WTC11 (cell line): ENCODE measurements at regions of chr3 and their contacts with region 1.

Region 1: GRCh38 chr3:150503402-150504099 is 42.7 kb downstream of the SERP1 start:
- DNase-seq: peak; percentile 24
- ATAC-seq: peak; percentile 92
- H3K4me3 Mint-ChIP-seq: no peak overlapping the region
- H3K27ac Mint-ChIP-seq: no peak overlapping the region
- H3K4me1 Mint-ChIP-seq: no peaks in the 10 kb centered on the region
- H3K27me3 Mint-ChIP-seq: peaks cover 4% of the 10 kb centered on the region
- CTCF ChIP-seq: no peak

Region 2: GRCh38 chr3:150384296-150385212 is 119.0 kb before region 1 on chr3:
- CTCF ChIA-PET with region 1: interaction called, 11 read pairs
- POLR2A ChIA-PET with region 1: no interaction called
- DNase-seq: peak; percentile 51
- ATAC-seq: peak; percentile 100
- H3K4me3 Mint-ChIP-seq: peak overlapping the region; percentile 36
- H3K27ac Mint-ChIP-seq: peak overlapping the region; percentile 89
- H3K4me1 Mint-ChIP-seq: peaks cover 18% of the 10 kb centered on the region
- H3K27me3 Mint-ChIP-seq: no peaks in the 10 kb centered on the region
- CTCF ChIP-seq: no peak

Region 3: DNA sequence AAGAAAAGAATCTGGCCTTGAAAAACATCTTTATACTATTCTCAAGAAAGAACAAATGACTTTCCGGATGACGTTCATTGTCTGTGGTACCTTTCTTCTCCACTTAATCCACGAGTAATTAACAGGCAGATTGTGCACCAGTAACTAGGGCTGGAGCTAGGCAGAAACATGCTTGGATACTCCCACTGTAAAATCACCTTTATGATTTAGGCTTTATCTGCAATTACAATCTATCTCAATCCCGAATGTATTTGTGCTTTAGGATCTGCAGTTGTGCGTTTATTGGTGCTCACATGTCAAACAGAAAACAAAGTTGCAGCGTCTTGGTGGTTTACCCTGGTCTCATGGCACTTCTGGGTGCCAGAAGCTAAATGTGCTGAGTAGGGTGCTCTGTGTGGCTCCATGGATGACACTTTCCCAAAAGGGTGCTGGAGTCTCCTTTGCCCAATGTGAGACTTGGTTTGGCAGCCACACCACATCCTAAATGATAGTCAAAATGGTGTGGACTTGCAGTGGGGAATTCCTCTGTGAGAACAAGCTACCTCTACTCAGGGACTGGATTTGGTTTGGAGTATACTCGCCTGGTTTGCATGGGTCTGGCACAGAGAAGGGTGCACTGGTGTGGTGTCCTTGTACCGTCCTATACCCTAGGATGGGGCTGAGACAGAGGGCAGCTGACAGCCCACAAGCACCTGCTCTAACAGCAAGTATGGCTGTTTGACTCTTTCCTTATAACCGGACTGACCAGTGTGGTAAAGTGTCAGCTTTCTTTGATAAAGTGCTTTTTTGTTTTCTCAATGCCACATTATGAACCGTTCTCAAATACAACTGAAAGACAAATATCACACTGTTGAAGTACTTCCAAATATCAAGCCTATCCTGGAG is 35.0 kb after region 1 on chr3:
- CTCF ChIA-PET with region 1: no interaction called
- POLR2A ChIA-PET with region 1: no interaction called
- DNase-seq: no peak
- ATAC-seq: peak; percentile 55
- H3K4me3 Mint-ChIP-seq: no peak overlapping the region
- H3K27ac Mint-ChIP-seq: no peak overlapping the region
- H3K4me1 Mint-ChIP-seq: no peaks in the 10 kb centered on the region
- H3K27me3 Mint-ChIP-seq: no peaks in the 10 kb centered on the region; the same call in 1 of the 2 replicates
- CTCF ChIP-seq: no peak

Region 4: DNA sequence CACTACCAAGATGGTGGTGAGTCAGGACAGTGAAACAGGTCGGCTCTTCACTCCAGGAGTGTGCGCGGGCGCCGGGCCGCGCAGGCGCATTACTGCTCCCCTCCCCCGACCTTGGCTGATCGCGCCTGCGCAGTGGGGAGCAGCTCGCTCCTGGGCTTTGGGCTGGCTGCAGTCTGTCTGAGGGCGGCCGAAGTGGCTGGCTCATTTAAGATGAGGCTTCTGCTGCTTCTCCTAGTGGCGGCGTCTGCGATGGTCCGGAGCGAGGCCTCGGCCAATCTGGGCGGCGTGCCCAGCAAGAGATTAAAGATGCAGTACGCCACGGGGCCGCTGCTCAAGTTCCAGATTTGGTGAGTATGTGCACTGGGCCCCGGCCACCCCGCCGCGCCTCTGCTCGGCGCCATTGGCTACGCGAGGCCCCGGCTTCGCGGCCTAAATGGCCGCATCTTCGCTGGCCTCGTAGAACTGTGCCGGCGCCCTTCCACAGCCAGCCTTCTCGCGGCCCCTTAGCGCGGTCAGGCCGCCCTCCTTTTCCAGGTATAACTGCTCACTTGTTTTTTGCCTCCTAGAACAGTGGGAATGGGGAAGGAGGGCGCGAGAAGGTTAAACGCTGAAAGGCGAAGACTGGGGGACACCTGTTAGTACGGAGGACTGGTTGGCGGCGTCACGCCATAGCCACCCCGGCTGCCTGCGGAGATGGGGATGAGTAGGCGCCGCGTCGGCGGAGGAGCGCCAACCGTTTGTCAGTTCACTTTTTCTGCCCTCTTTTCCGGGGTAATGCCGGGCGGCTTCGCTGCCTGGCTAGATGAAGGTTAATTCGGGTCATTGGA is 99.8 kb after region 1 on chr3 and contains the start of gene SELENOT:
- CTCF ChIA-PET with region 1: no interaction called
- POLR2A ChIA-PET with region 1: no interaction called
- DNase-seq: peak; percentile 94
- ATAC-seq: peak; percentile 87
- H3K4me3 Mint-ChIP-seq: peak within 1 kb of the TSS; percentile 92
- H3K27ac Mint-ChIP-seq: peak within 1 kb of the TSS; percentile 92
- H3K4me1 Mint-ChIP-seq: peaks cover 78% of the 10 kb centered on the region
- H3K27me3 Mint-ChIP-seq: no peaks in the 10 kb centered on the region
- CTCF ChIP-seq: no peak
- total RNA-seq, gene SELENOT: 48.3 to 57.0 TPM (median 53.4 TPM) in 3 replicates

Region 5: GRCh38 chr3:150787741-150788370 is 284.3 kb after region 1 on chr3:
- CTCF ChIA-PET with region 1: no interaction called
- POLR2A ChIA-PET with region 1: no interaction called
- DNase-seq: peak; percentile 91
- ATAC-seq: peak; percentile 90
- H3K4me3 Mint-ChIP-seq: no peak overlapping the region
- H3K27ac Mint-ChIP-seq: no peak overlapping the region
- H3K4me1 Mint-ChIP-seq: peaks cover 15% of the 10 kb centered on the region
- H3K27me3 Mint-ChIP-seq: peaks cover 9% of the 10 kb centered on the region
- CTCF ChIP-seq: peak; percentile 93